Activated CD8-positive, alpha-beta T cell treated with anti-CD3 and anti-CD28 coated beads for 36 hours (primary cell): ENCODE measurements at regions of chr6 and their contacts with region 1.

Region 1: DNA sequence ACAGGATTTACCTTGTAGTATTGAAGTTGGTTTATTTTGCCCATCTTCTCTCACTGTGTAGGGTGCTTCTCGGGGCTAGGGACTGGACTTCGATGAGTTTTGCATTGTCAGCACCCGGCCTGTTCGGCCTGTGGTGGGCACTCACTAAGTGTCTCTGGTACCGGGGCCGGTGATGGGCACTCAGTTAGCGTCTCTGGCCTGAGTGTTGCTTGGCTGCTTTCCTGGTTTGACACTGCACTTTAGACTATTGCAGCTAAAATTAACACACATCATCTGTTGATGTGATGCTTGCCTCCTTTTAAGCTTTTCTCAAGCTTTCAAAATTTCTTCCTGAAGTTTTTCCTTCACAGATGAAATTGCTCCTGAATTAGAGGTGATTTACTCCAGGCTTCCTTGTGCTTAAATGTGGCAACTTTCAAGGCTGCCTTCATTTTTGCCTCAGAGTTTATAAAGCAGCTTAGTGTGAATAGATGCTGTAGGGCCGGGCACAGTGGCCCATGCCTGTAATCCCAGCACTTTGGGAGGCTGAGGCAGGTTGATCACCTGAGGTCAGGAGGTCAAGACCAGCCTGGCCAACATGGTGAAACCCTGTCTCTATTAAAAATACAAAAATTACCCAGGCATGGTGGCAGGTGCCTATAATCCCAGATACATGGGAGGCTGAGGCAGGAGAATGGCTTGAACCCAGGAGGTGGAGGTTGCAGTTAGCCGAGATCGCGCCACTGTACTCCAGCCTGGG is 41.7 kb upstream of the TULP4 start:
- DNase-seq: peak; percentile 41
- ATAC-seq: no peak
- H3K4me3 Mint-ChIP-seq: no peak overlapping the region
- H3K27ac Mint-ChIP-seq: peak overlapping the region; percentile 59
- H3K4me1 Mint-ChIP-seq: peaks cover 25% of the 10 kb centered on the region
- H3K27me3 Mint-ChIP-seq: no peaks in the 10 kb centered on the region
- CTCF ChIP-seq: no peak

Region 2: GRCh38 chr6:158284007-158284875 is 13.7 kb after region 1 on chr6:
- CTCF ChIA-PET with region 1: interaction called, 21 read pairs
- POLR2A ChIA-PET with region 1: interaction called, 6 read pairs
- intact Hi-C with region 1: no loop called
- DNase-seq: peak; percentile 22
- ATAC-seq: peak; percentile 64
- H3K4me3 Mint-ChIP-seq: no peak overlapping the region
- H3K27ac Mint-ChIP-seq: peak overlapping the region; percentile 44
- H3K4me1 Mint-ChIP-seq: peaks cover 35% of the 10 kb centered on the region
- H3K27me3 Mint-ChIP-seq: no peaks in the 10 kb centered on the region
- CTCF ChIP-seq: no peak

Region 3: GRCh38 chr6:158290659-158291058 is 20.1 kb after region 1 on chr6:
- CTCF ChIA-PET with region 1: interaction called, 21 read pairs
- POLR2A ChIA-PET with region 1: no interaction called
- intact Hi-C with region 1: loop called (anchors 1 kb)
- DNase-seq: peak; percentile 82
- ATAC-seq: peak; percentile 99
- H3K4me3 Mint-ChIP-seq: peak overlapping the region; percentile 62
- H3K27ac Mint-ChIP-seq: peak overlapping the region; percentile 91
- H3K4me1 Mint-ChIP-seq: peaks cover 38% of the 10 kb centered on the region
- H3K27me3 Mint-ChIP-seq: no peaks in the 10 kb centered on the region
- CTCF ChIP-seq: no peak